ENCODE measurements at regions of chr2 and their contacts with region 1.

Region 1: DNA sequence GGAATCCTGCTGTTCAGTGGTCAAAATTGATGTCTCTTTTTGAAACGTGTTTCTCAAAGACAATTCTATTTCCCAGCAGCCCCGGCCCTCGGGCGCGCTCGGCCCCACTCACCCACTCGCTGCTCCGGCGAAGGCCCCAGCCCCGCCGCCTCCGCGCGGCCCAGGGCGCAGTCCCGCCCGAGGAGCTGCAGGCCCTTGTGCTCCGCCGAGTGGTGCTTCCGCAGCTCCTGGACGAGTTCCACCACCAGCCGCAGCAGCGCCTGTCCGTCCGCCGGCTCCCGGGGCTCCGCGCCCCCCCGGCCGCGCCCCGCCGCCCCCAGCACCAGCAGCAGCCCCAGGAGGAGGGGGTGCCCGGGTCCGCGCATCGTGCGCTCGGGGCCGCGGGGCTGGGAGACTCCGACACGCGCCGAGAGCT is 413 bp downstream of the ALKAL2 start:
- DNase-seq: peak in 2 of 4 donors; percentile 36 to 53
- ATAC-seq: peak; percentile 14
- H3K4me3 ChIP-seq: peak overlapping the region; percentile 16 to 33
- H3K27ac ChIP-seq: peak overlapping the region; percentile 57 to 92 (median 90)
- H3K4me1 ChIP-seq: peaks cover 43% of the 10 kb centered on the region
- H3K27me3 ChIP-seq: no peaks in the 10 kb centered on the region
- CTCF ChIP-seq: no peak
- POLR2A ChIP-seq: no peak

Region 2: GRCh38 chr2:169741-170140 is 117.7 kb before region 1 on chr2:
- intact Hi-C with region 1: loop called (anchors 5 kb)
- DNase-seq: no peak
- ATAC-seq: no peak
- H3K4me3 ChIP-seq: no peak overlapping the region
- H3K27ac ChIP-seq: no peak overlapping the region
- H3K4me1 ChIP-seq: peaks cover 15% of the 10 kb centered on the region
- H3K27me3 ChIP-seq: no peaks in the 10 kb centered on the region
- CTCF ChIP-seq: no peak
- POLR2A ChIP-seq: no peak

Region 3: GRCh38 chr2:444937-445884 is 157.7 kb after region 1 on chr2:
- intact Hi-C with region 1: no loop called
- DNase-seq: no peak
- ATAC-seq: no peak
- H3K4me3 ChIP-seq: no peak overlapping the region
- H3K27ac ChIP-seq: no peak overlapping the region
- H3K4me1 ChIP-seq: peaks cover 14% of the 10 kb centered on the region
- H3K27me3 ChIP-seq: no peaks in the 10 kb centered on the region
- CTCF ChIP-seq: no peak
- POLR2A ChIP-seq: no peak

Measured in body of pancreas (tissue), 4 donors.